T-cell (primary cell): ENCODE measurements at regions of chr17 and their contacts with region 1.

Region 1: DNA sequence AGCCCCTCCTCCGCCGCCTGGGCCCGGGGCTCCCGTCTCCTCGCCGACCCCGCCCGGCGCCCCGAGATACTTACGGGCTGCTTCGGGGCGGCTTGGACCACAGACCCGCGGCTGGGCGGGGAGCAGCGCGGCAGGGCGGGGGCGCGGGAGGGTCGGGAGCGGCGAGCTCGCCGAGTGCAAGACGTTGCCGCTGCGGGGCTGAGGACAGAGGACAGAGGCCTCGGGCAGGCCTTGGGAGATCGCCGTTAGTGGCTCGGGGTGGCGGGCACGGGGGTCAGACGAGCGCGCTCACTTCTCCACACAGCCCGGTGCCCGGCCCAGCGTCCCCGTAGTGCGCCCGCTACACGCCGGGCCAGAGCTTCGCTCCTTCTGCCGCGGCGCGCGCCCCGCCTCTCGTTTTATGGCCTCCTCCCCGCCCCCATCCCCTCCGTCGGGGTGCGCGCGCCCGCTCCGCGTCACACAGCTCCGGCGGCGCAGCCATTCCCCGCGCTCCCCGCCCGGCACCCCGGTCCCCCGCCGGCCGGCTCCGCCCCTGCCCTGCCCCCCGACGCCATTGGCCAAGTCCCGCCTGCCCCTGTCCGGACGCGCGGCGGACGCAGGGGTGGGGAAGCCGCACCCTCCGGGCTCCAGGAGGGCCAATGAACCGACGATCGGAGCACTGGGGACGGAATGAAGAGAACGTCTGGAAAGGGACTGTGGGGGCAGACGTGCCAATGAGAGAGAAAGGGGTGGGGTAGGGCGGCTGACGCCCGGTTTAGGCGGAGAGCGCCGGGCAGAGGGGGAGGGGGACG is at the start of gene TOB1:
- DNase-seq: peak; percentile 85 to 98 (median 94)
- ATAC-seq: peak; percentile 70 to 79 (median 74)
- H3K4me3 ChIP-seq: peak within 1 kb of the TSS; percentile 86 to 99
- H3K4me3 Mint-ChIP-seq: peak within 1 kb of the TSS; percentile 98 to 99 (median 98)
- H3K27ac ChIP-seq: peak within 1 kb of the TSS; percentile 99
- H3K27ac Mint-ChIP-seq: peak within 1 kb of the TSS; percentile 99 to 100
- H3K4me1 ChIP-seq: peaks cover 41 to 42% of the 10 kb centered on the region in 2 experiments
- H3K4me1 Mint-ChIP-seq: peaks cover 48 to 71% (median 57%) of the 10 kb centered on the region in 3 donors
- H3K27me3 ChIP-seq: no peaks in the 10 kb centered on the region
- H3K27me3 Mint-ChIP-seq: no peaks in the 10 kb centered on the region
- total RNA-seq, gene TOB1: 75.4 to 310 (median 92.6) TPM

Region 2: DNA sequence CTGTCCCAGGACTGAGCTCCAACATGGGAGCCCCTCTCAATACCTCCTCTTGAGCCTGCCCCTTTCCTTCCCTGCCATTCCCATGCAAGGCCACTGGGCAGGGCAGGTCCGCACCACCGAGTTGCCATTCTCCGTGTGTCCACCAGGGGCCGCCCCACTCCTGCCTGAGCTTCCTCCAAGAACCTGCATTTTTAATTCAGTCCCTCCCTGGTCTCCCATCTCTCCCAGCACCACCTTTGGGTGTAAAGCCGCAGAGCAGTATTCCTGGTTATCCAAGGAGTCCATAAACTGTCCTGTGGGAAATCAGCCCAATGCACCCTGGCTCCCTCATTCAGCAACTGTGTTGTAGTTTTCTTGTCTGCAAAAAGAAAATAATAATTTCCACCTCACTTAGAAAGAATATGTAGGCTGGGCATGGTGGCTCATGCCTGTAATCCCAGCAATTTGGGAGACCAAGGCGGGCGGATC is 83.0 kb before region 1 on chr17:
- CTCF ChIA-PET with region 1: interaction called in 1 of 2 experiments, 4 read pairs
- POLR2A ChIA-PET with region 1: interaction called in 1 of 2 experiments, 11 read pairs
- DNase-seq: peak; percentile 35 to 85 (median 67)
- ATAC-seq: peak; percentile 56 to 71 (median 62)
- H3K4me3 ChIP-seq: no peak overlapping the region
- H3K4me3 Mint-ChIP-seq: peak overlapping the region in 1 of 3 donors; percentile 5
- H3K27ac ChIP-seq: no peak overlapping the region
- H3K27ac Mint-ChIP-seq: peak overlapping the region in 1 of 2 donors; percentile 78
- H3K4me1 ChIP-seq: peaks cover 12 to 36% of the 10 kb centered on the region in 2 experiments
- H3K4me1 Mint-ChIP-seq: peaks cover 28 to 35% (median 31%) of the 10 kb centered on the region in 3 donors
- H3K27me3 ChIP-seq: peaks cover 0 to 18% of the 10 kb centered on the region in 2 experiments
- H3K27me3 Mint-ChIP-seq: peaks cover 0 to 2% of the 10 kb centered on the region in 2 donors

Region 3: GRCh38 chr17:50853015-50853615 is 13.1 kb before region 1 on chr17:
- CTCF ChIA-PET with region 1: interaction called, 4 to 31 read pairs
- POLR2A ChIA-PET with region 1: interaction called, 5 to 30 read pairs
- DNase-seq: peak in 1 of 35 experiments; percentile 4
- ATAC-seq: no peak
- H3K4me3 ChIP-seq: no peak overlapping the region
- H3K4me3 Mint-ChIP-seq: peak overlapping the region; percentile 73 to 80 (median 74)
- H3K27ac ChIP-seq: no peak overlapping the region
- H3K27ac Mint-ChIP-seq: peak overlapping the region in 1 of 2 donors; percentile 94
- H3K4me1 ChIP-seq: peaks cover 4 to 12% of the 10 kb centered on the region in 2 experiments
- H3K4me1 Mint-ChIP-seq: peaks cover 15 to 20% (median 16%) of the 10 kb centered on the region in 3 donors
- H3K27me3 ChIP-seq: no peaks in the 10 kb centered on the region
- H3K27me3 Mint-ChIP-seq: no peaks in the 10 kb centered on the region

Region 4: DNA sequence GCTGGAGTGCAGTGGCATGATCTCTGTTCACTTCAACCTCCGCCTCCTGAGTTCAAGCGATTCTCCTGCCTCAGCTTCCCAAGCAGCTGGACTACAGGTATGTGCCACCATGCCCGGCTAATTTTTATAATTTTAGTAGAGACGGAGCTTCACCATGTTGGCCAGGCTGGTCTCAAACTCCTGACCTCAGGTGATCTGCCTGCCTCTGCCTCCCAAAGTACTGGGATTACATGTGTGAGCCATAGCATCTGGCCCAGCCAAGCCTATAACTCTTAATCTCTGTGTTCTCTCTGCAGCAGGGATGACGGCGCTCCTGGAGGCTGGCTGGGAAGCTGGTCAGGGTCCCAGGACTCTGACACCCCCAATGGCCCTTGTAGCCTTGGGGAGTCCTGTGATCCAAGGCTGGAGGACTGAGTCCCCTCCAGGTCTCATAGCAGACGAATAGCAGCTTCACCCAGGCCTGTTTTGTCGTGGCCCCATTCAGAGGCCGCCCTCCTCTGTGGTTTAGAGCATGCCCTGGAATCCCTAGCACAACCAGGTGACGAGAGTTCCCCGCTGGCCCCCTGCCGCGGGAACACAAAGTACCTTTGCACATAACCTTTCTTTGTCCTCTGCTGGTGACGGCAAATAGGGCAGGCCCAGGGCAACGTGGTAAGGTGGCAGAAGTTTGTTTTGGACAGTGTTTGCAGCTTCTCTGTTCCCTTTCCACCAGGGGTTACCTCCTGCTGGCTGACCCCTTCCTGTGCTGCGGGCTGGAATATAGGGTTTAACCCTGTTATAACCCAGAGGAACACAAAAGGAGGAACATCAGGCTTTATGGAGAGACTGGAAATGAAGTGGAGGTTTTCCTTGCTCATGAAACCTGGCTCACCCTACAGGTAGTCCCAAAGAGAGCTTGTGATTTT is 42.9 kb after region 1 on chr17:
- CTCF ChIA-PET with region 1: interaction called in 1 of 2 experiments, 4 read pairs
- POLR2A ChIA-PET with region 1: interaction called, 7 to 26 read pairs
- DNase-seq: peak in 33 of 35 experiments; percentile 49 to 87 (median 70)
- ATAC-seq: peak; percentile 29 to 65 (median 38)
- H3K4me3 ChIP-seq: no peak overlapping the region
- H3K4me3 Mint-ChIP-seq: peak overlapping the region in 1 of 3 donors; percentile 68
- H3K27ac ChIP-seq: peak overlapping the region; percentile 99
- H3K27ac Mint-ChIP-seq: peak overlapping the region; percentile 94 to 97
- H3K4me1 ChIP-seq: peaks cover 52 to 88% of the 10 kb centered on the region in 2 experiments
- H3K4me1 Mint-ChIP-seq: peaks cover 62 to 75% (median 66%) of the 10 kb centered on the region in 3 donors
- H3K27me3 ChIP-seq: no peaks in the 10 kb centered on the region
- H3K27me3 Mint-ChIP-seq: no peaks in the 10 kb centered on the region

Region 5: DNA sequence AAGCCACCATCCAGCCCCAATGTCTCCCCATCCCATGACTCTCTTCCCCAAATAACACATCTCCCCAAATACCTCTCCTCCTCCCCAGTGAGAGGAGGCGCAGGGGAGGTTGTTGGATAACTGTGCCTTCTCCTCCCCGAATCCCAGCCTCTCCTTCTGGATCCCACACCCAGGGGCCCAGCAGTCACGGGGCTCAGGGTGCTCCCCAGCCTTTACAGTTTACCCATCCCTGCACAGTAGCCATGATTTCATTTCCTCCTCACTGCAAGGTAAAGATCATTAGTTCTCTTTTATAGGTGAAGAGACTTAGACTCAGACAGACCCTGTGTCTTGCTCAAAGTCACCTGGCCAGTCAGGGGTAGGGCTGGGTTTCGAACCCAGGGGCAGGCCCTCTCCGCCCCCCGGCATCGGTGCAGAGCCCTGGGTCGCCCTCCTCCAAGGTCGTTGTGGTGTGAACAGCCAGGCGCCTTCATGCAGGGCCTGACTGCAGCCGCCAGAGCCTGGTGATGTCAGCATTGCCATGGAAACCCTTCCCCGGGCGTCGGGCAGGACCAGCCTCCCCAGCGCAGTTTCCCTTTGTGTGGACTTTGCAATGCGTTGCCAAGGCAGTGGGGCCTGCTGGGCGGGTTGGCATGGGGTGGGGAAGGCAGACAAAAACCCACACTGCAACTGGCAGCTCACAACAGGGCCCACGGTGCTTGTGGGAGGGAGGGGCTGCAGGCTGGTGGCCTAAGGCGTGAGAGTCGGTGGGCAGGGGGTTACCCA is 53.3 kb after region 1 on chr17:
- CTCF ChIA-PET with region 1: no interaction called
- POLR2A ChIA-PET with region 1: interaction called, 19 read pairs
- DNase-seq: peak; percentile 40 to 94 (median 86)
- ATAC-seq: peak; percentile 80 to 96 (median 90)
- H3K4me3 ChIP-seq: peak overlapping the region in 1 of 2 donors; percentile 3
- H3K4me3 Mint-ChIP-seq: peak overlapping the region; percentile 53 to 67 (median 55)
- H3K27ac ChIP-seq: peak overlapping the region; percentile 93
- H3K27ac Mint-ChIP-seq: peak overlapping the region; percentile 97 to 98
- H3K4me1 ChIP-seq: peaks cover 32 to 54% of the 10 kb centered on the region in 2 experiments
- H3K4me1 Mint-ChIP-seq: peaks cover 49 to 63% (median 57%) of the 10 kb centered on the region in 3 donors
- H3K27me3 ChIP-seq: no peaks in the 10 kb centered on the region
- H3K27me3 Mint-ChIP-seq: no peaks in the 10 kb centered on the region

Region 6: DNA sequence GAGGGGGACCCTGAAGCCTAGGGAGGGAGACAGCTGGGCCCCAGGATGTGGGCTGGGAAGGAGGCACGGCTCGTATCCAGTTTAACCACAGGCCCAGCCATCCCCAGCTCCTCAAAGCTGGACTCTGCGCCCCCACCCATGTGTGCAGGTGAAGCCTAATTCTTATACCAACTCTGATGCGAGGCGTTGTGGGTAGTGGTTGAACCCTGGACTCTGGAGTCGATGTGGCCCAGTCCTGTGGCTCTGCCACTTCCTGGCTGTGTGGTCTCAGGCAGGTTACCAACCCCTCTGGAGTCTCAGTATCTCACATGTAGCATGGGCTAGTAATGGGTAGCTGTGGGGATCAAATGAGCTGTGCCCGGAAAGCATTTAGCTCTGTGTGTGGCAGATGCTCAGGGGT is 60.3 kb after region 1 on chr17:
- CTCF ChIA-PET with region 1: interaction called in 1 of 2 experiments, 6 read pairs
- POLR2A ChIA-PET with region 1: interaction called, 4 to 11 read pairs
- DNase-seq: no peak
- ATAC-seq: no peak
- H3K4me3 ChIP-seq: no peak overlapping the region
- H3K4me3 Mint-ChIP-seq: no peak overlapping the region
- H3K27ac ChIP-seq: no peak overlapping the region
- H3K27ac Mint-ChIP-seq: peak overlapping the region in 1 of 2 donors; percentile 8
- H3K4me1 ChIP-seq: peaks cover 2 to 38% of the 10 kb centered on the region in 2 experiments
- H3K4me1 Mint-ChIP-seq: peaks cover 41 to 57% (median 57%) of the 10 kb centered on the region in 3 donors
- H3K27me3 ChIP-seq: no peaks in the 10 kb centered on the region
- H3K27me3 Mint-ChIP-seq: no peaks in the 10 kb centered on the region

Region 7: DNA sequence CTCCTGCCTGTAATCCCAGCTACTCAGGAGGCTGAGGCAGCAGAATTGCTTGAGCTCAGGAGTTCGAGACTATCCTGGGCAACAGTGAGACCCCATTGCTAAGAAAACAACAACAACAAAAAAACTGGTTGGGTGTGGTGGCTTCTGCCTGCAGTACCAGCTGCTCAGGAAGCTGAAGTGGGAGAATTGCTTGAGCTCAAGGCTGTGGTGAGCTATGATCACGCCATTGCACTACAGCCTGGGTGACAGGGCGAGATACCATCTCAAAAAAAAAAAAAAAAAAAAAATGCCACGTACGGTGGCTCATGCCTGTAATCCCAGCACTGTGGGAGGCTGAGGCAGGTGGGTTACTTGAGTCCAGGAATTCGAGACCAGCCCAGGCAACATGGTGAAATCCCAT is 334.1 kb after region 1 on chr17:
- CTCF ChIA-PET with region 1: no interaction called
- POLR2A ChIA-PET with region 1: no interaction called
- DNase-seq: peak in 3 of 35 experiments; percentile 3 to 35 (median 11)
- ATAC-seq: peak; percentile 48 to 87 (median 76)
- H3K4me3 ChIP-seq: no peak overlapping the region
- H3K4me3 Mint-ChIP-seq: no peak overlapping the region
- H3K27ac ChIP-seq: no peak overlapping the region
- H3K27ac Mint-ChIP-seq: peak overlapping the region in 1 of 2 donors; percentile 86
- H3K4me1 ChIP-seq: peaks cover 4 to 11% of the 10 kb centered on the region in 2 experiments
- H3K4me1 Mint-ChIP-seq: peaks cover 0 to 18% (median 9%) of the 10 kb centered on the region in 3 donors
- H3K27me3 ChIP-seq: no peaks in the 10 kb centered on the region
- H3K27me3 Mint-ChIP-seq: no peaks in the 10 kb centered on the region